SK-N-SH (cell line): ENCODE measurements at regions of chr18 and their contacts with region 1.

Region 1: DNA sequence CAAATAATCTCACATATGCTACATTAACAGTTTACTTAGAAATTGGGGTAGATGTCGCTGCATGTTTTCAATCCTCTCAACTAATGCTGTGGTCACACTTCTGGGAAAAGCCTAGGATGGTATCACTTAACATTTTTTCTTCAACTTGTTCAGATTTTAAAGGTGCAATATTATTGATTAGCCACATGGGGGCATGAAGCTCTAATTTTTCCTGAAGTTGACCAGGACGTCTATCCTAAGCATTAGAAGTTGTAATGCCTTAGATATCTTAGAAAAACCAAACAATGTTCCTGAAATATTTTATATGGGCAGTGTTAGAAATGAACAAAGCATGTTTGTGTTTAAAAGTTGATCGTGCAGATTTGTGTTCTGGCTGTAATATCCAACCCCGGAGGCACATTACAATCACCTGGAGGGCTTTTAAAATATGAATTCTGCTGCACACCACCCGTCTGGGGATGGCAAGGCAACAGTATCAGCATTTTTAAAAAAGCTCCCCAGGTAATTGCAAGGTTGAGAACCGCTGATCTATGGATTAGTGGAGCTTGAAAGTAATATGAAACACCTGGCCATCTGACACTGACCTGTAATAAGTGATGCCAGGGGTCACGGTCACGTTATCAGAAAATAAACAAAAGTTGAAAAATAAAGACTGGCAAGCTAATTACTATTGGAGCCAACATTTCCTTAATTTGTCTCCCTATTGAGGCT is 100.5 kb upstream of the LMAN1 start:
- DNase-seq: peak; percentile 45
- H3K4me3 ChIP-seq: no peak overlapping the region
- H3K27ac ChIP-seq: peak overlapping the region; percentile 14 to 67; a peak in 3 of 4 replicates
- H3K4me1 ChIP-seq: peaks cover 10 to 31% of the 10 kb centered on the region in 2 experiments; a peak in 3 of 4 replicates
- H3K27me3 ChIP-seq: no peaks in the 10 kb centered on the region
- CTCF ChIP-seq: peak; percentile 75
- EP300 ChIP-seq: 0 out of 4 replicates have a peak, but pooled peaks of 1 of the 2 experiments have one; percentile 16
- RAD21 ChIP-seq: peak; percentile 94

Region 2: DNA sequence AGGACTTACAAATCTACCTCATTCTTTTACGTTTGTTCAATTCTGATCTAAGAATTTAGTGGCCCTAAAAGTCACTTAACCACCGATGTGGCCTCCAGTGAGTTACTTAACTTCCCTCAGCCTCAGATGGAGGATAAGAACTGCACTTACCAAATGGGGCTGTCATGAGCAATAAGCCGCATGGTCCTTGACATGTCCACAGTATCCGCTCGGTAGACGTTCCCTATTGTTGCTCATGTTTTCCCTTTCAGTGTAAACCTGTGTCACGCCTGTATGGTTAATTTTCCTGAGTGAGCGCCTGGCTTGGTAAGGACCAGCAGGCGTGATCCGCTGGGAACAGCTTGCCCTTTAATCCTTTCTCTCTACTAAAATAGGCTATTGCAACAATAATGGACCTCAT is 299.5 kb before region 1 on chr18:
- CTCF ChIA-PET with region 1: no interaction called
- POLR2A ChIA-PET with region 1: no interaction called
- DNase-seq: no peak
- H3K4me3 ChIP-seq: no peak overlapping the region
- H3K27ac ChIP-seq: no peak overlapping the region
- H3K4me1 ChIP-seq: no peaks in the 10 kb centered on the region; a peak in 1 of 4 replicates
- H3K27me3 ChIP-seq: no peaks in the 10 kb centered on the region
- CTCF ChIP-seq: no peak
- EP300 ChIP-seq: no peak
- RAD21 ChIP-seq: no peak

Region 3: GRCh38 chr18:59249205-59249774 is 210.2 kb before region 1 on chr18:
- CTCF ChIA-PET with region 1: interaction called, 10 read pairs
- POLR2A ChIA-PET with region 1: no interaction called
- DNase-seq: peak; percentile 76
- H3K4me3 ChIP-seq: peak overlapping the region in 1 of 2 experiments; percentile 4; a peak in 1 of 4 replicates
- H3K27ac ChIP-seq: no peak overlapping the region
- H3K4me1 ChIP-seq: 0 out of 4 replicates have a peak, but pooled peaks cover 0 to 4% of the 10 kb centered on the region in 2 experiments
- H3K27me3 ChIP-seq: peaks cover 17% of the 10 kb centered on the region; the same call in 1 of the 2 replicates
- CTCF ChIP-seq: peak; percentile 78
- EP300 ChIP-seq: no peak
- RAD21 ChIP-seq: peak; percentile 93

Region 4: GRCh38 chr18:59358712-59359575 is 100.6 kb before region 1 on chr18 and contains the start of gene LMAN1:
- CTCF ChIA-PET with region 1: no interaction called
- POLR2A ChIA-PET with region 1: no interaction called
- DNase-seq: peak; percentile 98
- H3K4me3 ChIP-seq: peak within 1 kb of the TSS; percentile 87 to 89
- H3K27ac ChIP-seq: peak within 1 kb of the TSS; percentile 70 to 80; a peak in 3 of 4 replicates
- H3K4me1 ChIP-seq: peaks cover 9 to 11% of the 10 kb centered on the region in 2 experiments; a peak in 3 of 4 replicates
- H3K27me3 ChIP-seq: no peaks in the 10 kb centered on the region
- CTCF ChIP-seq: no peak
- EP300 ChIP-seq: no peak
- RAD21 ChIP-seq: no peak
- polyA plus RNA-seq, gene LMAN1: 43.4 and 56.5 TPM in 2 replicates

Region 5: DNA sequence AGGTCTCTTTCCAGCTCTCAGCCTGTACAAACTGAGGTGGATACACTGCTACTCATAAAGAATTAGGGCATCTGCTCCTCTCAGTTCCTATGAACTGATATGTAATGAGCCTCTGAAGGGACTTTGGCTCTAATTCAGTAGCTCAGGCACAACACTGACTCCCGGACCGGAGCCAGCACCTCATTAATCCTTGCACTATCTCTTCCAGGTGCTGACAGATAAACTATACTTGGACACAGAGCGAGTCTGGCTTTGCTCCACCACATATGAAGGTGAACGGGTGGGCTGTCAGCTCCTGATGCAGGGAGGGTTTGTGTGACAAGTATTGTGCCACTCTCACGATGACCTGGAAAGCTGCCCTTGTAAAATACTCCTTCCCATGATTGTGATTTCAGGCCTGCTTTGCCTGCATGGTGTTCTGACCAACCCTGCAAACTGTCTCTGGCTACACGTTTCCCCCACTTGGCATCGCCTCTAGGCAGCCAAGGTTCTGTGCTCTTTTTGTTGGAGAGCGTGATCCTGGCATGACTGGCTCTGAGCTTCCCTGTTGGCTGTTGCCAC is 11.1 kb after region 1 on chr18:
- CTCF ChIA-PET with region 1: interaction called, 28 read pairs
- POLR2A ChIA-PET with region 1: no interaction called
- DNase-seq: no peak
- H3K4me3 ChIP-seq: no peak overlapping the region
- H3K27ac ChIP-seq: peak overlapping the region in 1 of 2 experiments; percentile 9; a peak in 1 of 4 replicates
- H3K4me1 ChIP-seq: peaks cover 0 to 12% of the 10 kb centered on the region in 2 experiments; a peak in 1 of 4 replicates
- H3K27me3 ChIP-seq: no peaks in the 10 kb centered on the region
- CTCF ChIP-seq: no peak
- EP300 ChIP-seq: peak in 1 of 2 experiments; percentile 20; a peak in 1 of 4 replicates
- RAD21 ChIP-seq: no peak

Region 6: GRCh38 chr18:59516356-59517155 is 57.0 kb after region 1 on chr18:
- CTCF ChIA-PET with region 1: interaction called, 13 read pairs
- POLR2A ChIA-PET with region 1: no interaction called
- DNase-seq: peak; percentile 45
- H3K4me3 ChIP-seq: no peak overlapping the region
- H3K27ac ChIP-seq: peak overlapping the region in 1 of 2 experiments; percentile 89; a peak in 3 of 4 replicates
- H3K4me1 ChIP-seq: peaks cover 5 to 32% of the 10 kb centered on the region in 2 experiments; a peak in 3 of 4 replicates
- H3K27me3 ChIP-seq: no peaks in the 10 kb centered on the region
- CTCF ChIP-seq: no peak
- EP300 ChIP-seq: peak; percentile 49 to 90; a peak in 3 of 4 replicates
- RAD21 ChIP-seq: 0 out of 2 replicates have a peak, but pooled peaks have one; percentile 10

Region 7: DNA sequence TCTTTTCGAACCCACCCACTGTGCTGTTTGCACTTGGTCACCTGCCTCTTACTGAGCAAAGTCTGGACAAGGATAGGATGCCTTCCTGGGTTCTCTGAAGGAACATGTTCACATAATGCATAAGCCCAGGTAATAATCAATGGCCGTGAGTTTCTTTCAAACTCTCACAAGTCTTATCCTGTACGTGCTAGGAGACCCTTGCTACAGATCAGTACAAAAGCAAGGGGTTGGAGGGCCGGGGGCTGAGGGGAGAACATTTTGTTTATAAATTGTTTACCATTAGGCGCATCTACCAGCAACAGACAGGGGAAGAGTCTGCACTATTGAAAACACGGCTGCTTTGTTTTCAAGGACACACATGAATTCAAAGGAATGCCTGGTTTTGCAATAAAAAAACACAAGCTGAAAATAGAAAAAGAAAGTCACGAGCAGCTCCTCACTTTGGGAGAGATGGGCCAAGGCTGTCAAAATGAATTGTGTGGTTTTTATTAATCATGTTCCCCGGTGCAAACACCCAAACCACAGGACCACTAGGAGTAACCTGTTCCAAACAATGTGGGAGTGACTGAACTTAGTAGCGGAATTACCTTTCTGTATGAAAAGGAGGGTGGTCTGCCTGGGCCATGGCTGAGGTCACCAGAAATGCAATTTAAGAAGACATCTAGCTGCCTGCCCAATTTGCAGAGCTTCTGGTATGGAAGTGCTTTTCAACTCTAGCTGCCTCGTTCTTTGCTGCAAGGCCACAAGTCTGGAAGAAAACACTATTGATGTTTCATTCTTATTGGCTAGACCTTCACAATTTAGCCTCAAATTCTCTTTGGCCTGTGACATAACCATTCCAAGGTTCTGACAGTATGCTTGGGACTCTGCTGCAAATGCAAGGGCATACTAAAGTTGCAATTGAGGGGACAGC is 164.2 kb after region 1 on chr18:
- CTCF ChIA-PET with region 1: interaction called, 12 read pairs
- POLR2A ChIA-PET with region 1: no interaction called
- DNase-seq: no peak
- H3K4me3 ChIP-seq: no peak overlapping the region
- H3K27ac ChIP-seq: 0 out of 4 replicates have a peak overlapping the region, but pooled peaks of 1 of the 2 experiments have one; percentile 10
- H3K4me1 ChIP-seq: no peaks in the 10 kb centered on the region; a peak in 1 of 4 replicates
- H3K27me3 ChIP-seq: no peaks in the 10 kb centered on the region
- CTCF ChIP-seq: no peak
- EP300 ChIP-seq: 0 out of 4 replicates have a peak, but pooled peaks of 1 of the 2 experiments have one; percentile 4
- RAD21 ChIP-seq: no peak

Region 8: GRCh38 chr18:59783138-59783537 is 323.6 kb after region 1 on chr18:
- CTCF ChIA-PET with region 1: interaction called, 15 read pairs
- POLR2A ChIA-PET with region 1: no interaction called
- DNase-seq: peak; percentile 68
- H3K4me3 ChIP-seq: no peak overlapping the region
- H3K27ac ChIP-seq: peak overlapping the region in 1 of 2 experiments; percentile 46; a peak in 2 of 4 replicates
- H3K4me1 ChIP-seq: peaks cover 2 to 10% of the 10 kb centered on the region in 2 experiments; a peak in 3 of 4 replicates
- H3K27me3 ChIP-seq: no peaks in the 10 kb centered on the region
- CTCF ChIP-seq: peak; percentile 81
- EP300 ChIP-seq: no peak
- RAD21 ChIP-seq: peak; percentile 77